ENCODE measurements at regions of chr19 and their contacts with region 1.

Region 1: GRCh38 chr19:35740423-35741202 is 1.6 kb downstream of the IGFLR1 start:
- DNase-seq: peak; percentile 89
- ATAC-seq: peak; percentile 65
- H3K4me3 Mint-ChIP-seq: peak overlapping the region; percentile 95
- H3K27ac Mint-ChIP-seq: peak overlapping the region; percentile 95
- H3K4me1 Mint-ChIP-seq: peaks cover 66% of the 10 kb centered on the region
- H3K27me3 Mint-ChIP-seq: no peaks in the 10 kb centered on the region
- CTCF ChIP-seq: no peak

Region 2: GRCh38 chr19:35612559-35613321 is 127.9 kb before region 1 on chr19 and contains the start of gene HAUS5:
- CTCF ChIA-PET with region 1: no interaction called
- POLR2A ChIA-PET with region 1: interaction called, 11 read pairs
- intact Hi-C with region 1: loop called (anchors 2 kb)
- DNase-seq: peak; percentile 99
- ATAC-seq: peak; percentile 78
- H3K4me3 Mint-ChIP-seq: peak within 1 kb of the TSS; percentile 87
- H3K27ac Mint-ChIP-seq: peak within 1 kb of the TSS; percentile 93
- H3K4me1 Mint-ChIP-seq: peaks cover 48% of the 10 kb centered on the region
- H3K27me3 Mint-ChIP-seq: no peaks in the 10 kb centered on the region
- CTCF ChIP-seq: no peak
- total RNA-seq, gene HAUS5: 31.5 and 36.1 TPM in 2 replicates

Region 3: DNA sequence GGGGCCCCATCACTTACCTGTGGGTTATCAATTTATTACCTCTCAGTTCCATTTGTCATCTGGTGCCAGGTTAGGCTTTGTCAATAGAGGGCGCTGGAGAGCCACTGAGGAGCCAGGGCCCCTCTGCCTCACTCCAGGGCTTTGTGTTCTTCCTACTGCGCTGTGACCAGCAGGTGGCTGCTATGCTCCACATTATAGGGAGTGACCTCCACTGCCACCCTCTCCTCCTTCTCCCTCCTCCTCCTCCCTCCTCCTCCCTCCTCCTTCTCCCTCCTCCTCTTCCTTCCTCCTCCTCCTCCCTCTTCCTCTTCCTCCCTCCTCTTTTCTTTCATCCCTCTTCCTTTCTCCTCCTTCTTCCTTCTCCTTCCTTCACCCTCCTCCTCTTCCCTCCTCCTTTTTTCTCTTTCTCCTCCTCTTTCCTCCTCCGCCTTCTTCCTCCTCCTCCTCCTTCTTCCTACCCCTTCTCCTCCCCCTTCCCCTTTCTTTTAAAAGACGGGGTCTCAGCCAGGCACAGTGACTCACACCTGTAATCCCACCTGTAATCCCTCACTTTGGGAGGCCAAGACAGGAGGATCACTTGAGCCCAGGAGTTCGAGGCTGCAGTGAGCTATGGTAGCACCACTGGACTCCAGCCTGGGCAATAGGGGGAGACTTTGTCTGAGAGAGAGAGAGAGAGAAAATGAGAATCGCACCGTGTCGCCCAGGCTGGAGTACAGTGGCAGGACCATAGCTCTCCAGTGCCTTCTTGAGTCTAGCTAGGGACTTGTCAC is 46.6 kb before region 1 on chr19:
- CTCF ChIA-PET with region 1: interaction called, 5 read pairs
- POLR2A ChIA-PET with region 1: interaction called, 5 read pairs
- intact Hi-C with region 1: loop called (anchors 2 kb)
- DNase-seq: peak; percentile 76
- ATAC-seq: peak; percentile 100
- H3K4me3 Mint-ChIP-seq: no peak overlapping the region
- H3K27ac Mint-ChIP-seq: no peak overlapping the region
- H3K4me1 Mint-ChIP-seq: peaks cover 3% of the 10 kb centered on the region
- H3K27me3 Mint-ChIP-seq: peaks cover 4% of the 10 kb centered on the region
- CTCF ChIP-seq: no peak

Region 4: GRCh38 chr19:35757749-35758608 is 17.4 kb after region 1 on chr19 and contains the start of gene PROSER3:
- CTCF ChIA-PET with region 1: interaction called, 3 read pairs
- POLR2A ChIA-PET with region 1: interaction called, 69 read pairs
- intact Hi-C with region 1: loop called (anchors 1 kb)
- DNase-seq: peak; percentile 94
- ATAC-seq: peak; percentile 95
- H3K4me3 Mint-ChIP-seq: peak within 1 kb of the TSS; percentile 97
- H3K27ac Mint-ChIP-seq: peak within 1 kb of the TSS; percentile 96
- H3K4me1 Mint-ChIP-seq: peaks cover 33% of the 10 kb centered on the region
- H3K27me3 Mint-ChIP-seq: peaks cover 15% of the 10 kb centered on the region
- CTCF ChIP-seq: no peak
- total RNA-seq, gene PROSER3: 43.7 and 60.5 TPM in 2 replicates

Region 5: GRCh38 chr19:35899547-35900214 is 159.1 kb after region 1 on chr19:
- CTCF ChIA-PET with region 1: no interaction called
- POLR2A ChIA-PET with region 1: interaction called, 20 read pairs
- intact Hi-C with region 1: loop called (anchors 1 kb)
- DNase-seq: peak; percentile 93
- ATAC-seq: peak; percentile 57
- H3K4me3 Mint-ChIP-seq: peak overlapping the region; percentile 95
- H3K27ac Mint-ChIP-seq: peak overlapping the region; percentile 95
- H3K4me1 Mint-ChIP-seq: peaks cover 77% of the 10 kb centered on the region
- H3K27me3 Mint-ChIP-seq: no peaks in the 10 kb centered on the region
- CTCF ChIP-seq: no peak